Thyroid gland (tissue), 4 donors: ENCODE measurements at regions of chr19 and their contacts with region 1.

Region 1: DNA sequence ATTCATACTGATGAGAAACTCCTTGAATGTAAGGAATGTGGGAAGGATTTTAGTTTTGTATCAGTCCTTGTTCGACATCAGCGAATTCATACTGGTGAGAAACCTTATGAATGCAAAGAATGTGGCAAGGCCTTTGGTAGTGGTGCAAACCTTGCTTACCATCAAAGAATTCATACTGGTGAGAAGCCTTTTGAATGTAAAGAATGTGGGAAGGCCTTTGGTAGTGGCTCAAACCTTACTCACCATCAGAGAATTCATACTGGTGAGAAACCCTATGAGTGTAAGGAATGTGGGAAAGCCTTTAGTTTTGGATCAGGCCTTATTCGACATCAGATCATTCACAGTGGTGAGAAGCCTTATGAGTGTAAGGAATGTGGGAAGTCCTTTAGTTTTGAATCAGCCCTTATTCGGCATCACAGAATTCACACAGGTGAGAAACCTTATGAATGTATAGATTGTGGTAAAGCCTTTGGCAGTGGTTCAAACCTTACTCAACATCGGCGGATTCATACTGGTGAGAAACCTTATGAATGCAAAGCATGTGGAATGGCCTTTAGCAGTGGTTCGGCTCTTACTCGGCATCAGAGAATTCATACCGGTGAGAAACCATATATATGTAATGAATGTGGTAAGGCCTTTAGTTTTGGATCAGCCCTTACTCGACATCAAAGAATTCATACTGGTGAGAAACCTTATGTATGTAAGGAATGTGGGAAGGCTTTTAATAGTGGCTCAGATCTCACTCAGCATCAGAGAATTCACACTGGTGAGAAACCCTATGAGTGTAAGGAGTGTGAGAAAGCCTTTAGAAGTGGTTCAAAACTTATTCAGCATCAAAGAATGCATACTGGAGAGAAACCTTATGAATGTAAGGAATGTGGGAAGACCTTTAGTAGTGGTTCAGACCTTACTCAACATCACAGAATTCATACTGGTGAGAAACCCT is 26.6 kb downstream of the ZNF345 start:
- DNase-seq: no peak
- H3K4me3 ChIP-seq: no peak overlapping the region
- H3K27ac ChIP-seq: no peak overlapping the region
- H3K4me1 ChIP-seq: no peaks in the 10 kb centered on the region
- H3K27me3 ChIP-seq: no peaks in the 10 kb centered on the region
- CTCF ChIP-seq: no peak
- POLR2A ChIP-seq: no peak

Region 2: DNA sequence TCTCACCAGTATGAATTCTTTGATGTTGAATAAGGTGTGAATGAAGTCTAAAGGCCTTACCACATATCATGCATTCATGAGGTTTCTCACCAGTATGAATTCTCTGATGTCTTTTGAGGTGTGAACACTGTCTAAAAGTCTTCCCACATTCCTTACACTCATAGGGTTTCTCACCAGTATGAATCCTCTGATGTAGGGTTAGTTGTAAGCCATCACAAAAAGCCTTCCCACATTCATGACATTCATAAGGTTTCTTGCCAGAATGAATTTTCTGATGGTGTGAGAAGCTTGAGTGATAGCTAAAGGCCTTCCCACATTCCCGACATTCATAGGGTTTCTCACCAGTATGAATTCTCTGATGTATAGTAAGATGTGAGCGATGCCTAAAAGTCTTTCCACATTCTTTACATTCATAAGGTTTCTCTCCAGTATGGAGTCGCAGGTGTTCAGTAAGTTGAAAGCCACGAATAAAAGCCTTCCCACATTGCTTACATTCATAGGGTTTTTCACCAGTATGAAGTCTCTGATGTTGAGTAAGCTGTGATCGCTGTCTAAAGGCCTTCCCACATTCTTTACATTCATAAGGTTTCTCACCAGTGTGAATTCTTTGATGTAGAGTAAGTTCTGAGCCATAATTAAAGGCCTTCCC is 238.3 kb before region 1 on chr19:
- intact Hi-C with region 1: loop called (anchors 10 kb)
- DNase-seq: no peak
- H3K4me3 ChIP-seq: no peak overlapping the region
- H3K27ac ChIP-seq: no peak overlapping the region
- H3K4me1 ChIP-seq: no peaks in the 10 kb centered on the region
- H3K27me3 ChIP-seq: no peaks in the 10 kb centered on the region
- CTCF ChIP-seq: no peak
- POLR2A ChIP-seq: no peak

Region 3: DNA sequence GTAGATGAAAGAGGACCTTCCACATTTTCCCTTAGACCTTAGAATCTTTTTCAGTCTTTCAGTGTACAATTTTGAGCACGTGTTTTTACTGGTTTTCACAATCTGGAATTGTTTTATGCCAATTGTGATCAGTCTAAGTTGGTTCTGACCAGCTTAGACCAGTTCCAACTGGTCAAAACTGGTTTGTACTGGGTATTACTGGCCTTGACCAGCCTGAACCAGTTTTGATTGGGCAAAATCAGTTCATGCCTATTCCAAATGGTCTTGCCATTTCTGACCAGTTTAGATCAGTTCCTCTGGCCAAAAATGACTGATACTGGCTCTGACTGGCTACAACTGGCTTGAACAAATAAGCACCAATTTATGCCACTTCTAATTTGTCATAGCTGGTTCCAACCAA is 258.8 kb after region 1 on chr19:
- intact Hi-C with region 1: loop called (anchors 10 kb)
- DNase-seq: no peak
- H3K4me3 ChIP-seq: no peak overlapping the region
- H3K27ac ChIP-seq: no peak overlapping the region
- H3K4me1 ChIP-seq: no peaks in the 10 kb centered on the region
- H3K27me3 ChIP-seq: no peaks in the 10 kb centered on the region
- CTCF ChIP-seq: no peak
- POLR2A ChIP-seq: no peak